K562 (cell line): ENCODE measurements at regions of chr6 and their contacts with region 1.

Region 1: GRCh38 chr6:137799950-137800568 is 67.0 kb upstream of the TNFAIP3 start:
- DNase-seq: peak; percentile 51 to 88 (median 60)
- ATAC-seq: peak; percentile 92
- H3K4me3 ChIP-seq: no peak overlapping the region
- H3K27ac ChIP-seq: no peak overlapping the region
- H3K4me1 ChIP-seq: peaks cover 0 to 6% of the 10 kb centered on the region in 2 experiments; a peak in 4 of 5 replicates
- H3K27me3 ChIP-seq: no peaks in the 10 kb centered on the region
- CTCF ChIP-seq: peak; percentile 79 to 93 (median 85)
- EP300 ChIP-seq: 0 out of 2 replicates have a peak, but pooled peaks have one; percentile 18
- POLR2A ChIP-seq: no peak
- RAD21 ChIP-seq: peak; percentile 97 to 98

Region 2: DNA sequence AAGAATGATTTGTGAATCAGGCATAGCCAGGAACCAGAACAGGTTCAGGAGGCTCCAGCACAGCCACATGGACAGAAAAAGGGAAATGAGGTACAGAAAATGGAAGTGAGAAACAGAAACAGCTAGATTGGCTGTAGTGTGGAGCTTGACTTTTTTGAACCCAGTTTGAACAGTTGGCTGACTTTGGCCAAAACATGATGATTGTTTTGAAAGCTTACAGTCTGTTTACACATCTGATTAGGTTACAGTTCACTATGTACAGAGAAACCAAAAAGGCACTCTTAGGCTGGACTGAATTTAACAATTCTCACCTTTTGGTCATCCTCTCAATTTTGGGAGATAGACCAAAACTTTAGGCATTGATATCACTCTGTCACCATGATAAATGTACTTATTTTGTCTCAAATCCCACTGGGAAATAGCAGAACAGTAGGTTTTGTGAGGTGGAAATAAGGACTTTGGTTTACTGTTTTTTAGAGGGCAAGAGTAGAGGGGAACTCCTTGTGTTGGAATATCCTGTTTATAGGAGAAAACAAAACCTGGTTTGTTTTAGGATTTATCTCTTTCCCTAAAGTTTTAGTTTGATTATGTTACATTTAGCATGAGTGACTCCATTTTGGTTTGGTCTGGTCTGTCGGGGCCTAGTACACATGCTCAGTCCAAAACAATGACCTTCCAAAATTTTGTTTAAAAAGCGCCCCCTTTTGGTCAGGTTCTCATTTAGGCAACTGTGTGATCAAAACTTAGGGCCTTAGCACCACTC is 429.0 kb before region 1 on chr6:
- CTCF ChIA-PET with region 1: no interaction called
- POLR2A ChIA-PET with region 1: no interaction called
- in situ Hi-C with region 1: no loop called
- intact Hi-C with region 1: no loop called
- DNase-seq: peak in 1 of 4 experiments; percentile 42
- ATAC-seq: peak; percentile 77
- H3K4me3 ChIP-seq: no peak overlapping the region
- H3K27ac ChIP-seq: no peak overlapping the region
- H3K4me1 ChIP-seq: no peaks in the 10 kb centered on the region
- H3K27me3 ChIP-seq: peaks cover 0 to 2% of the 10 kb centered on the region in 2 experiments; a peak in 1 of 5 replicates
- CTCF ChIP-seq: peak in 2 of 3 experiments; percentile 39 to 46; a peak in 3 of 6 replicates
- EP300 ChIP-seq: no peak
- POLR2A ChIP-seq: no peak
- RAD21 ChIP-seq: peak in 1 of 2 experiments; percentile 17; a peak in 1 of 4 replicates

Region 3: DNA sequence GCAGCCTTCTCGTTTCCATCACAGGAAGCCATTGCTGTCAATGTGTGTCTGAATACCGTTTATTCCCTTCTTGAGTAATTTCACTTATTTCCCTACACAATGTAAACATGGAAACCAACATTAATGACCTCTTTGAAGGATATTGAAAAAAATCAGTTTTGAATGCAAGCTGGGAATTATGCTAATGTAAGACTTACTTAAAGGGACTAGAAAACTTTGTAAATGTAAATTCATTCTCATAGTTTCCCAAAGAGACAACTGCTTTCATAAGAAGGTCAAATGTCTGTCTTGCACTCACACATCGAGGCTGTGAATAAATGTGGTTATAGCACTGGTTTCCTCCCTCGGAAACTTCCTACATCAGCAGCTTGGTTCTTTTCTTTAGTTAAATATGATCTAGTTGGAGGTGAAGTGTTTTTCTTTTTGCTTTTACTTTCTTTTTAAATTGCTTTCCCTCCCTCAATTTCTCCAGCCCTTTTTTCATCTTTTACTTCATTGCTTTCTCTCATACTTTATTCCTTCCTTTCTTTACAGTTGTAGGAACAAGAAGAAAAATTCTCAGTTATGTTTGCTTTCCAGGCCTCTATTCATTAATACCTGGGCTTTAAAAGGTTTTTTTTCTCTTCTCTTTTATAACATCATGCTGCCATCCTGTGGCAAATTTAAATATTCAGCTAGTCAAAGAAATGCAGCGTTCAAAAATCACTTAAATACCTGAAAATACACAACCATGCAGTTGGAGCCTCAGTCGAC is 175.3 kb after region 1 on chr6:
- CTCF ChIA-PET with region 1: interaction called, 5 read pairs
- POLR2A ChIA-PET with region 1: interaction called, 3 read pairs
- in situ Hi-C with region 1: no loop called
- intact Hi-C with region 1: loop called (anchors 1 kb)
- DNase-seq: no peak
- ATAC-seq: peak; percentile 49; the same call in 2 of the 3 replicates
- H3K4me3 ChIP-seq: no peak overlapping the region
- H3K27ac ChIP-seq: no peak overlapping the region
- H3K4me1 ChIP-seq: peaks cover 5 to 15% of the 10 kb centered on the region in 2 experiments; a peak in 3 of 5 replicates
- H3K27me3 ChIP-seq: no peaks in the 10 kb centered on the region
- CTCF ChIP-seq: peak; percentile 29 to 70 (median 46); a peak in 3 of 6 replicates
- EP300 ChIP-seq: no peak
- POLR2A ChIP-seq: no peak
- RAD21 ChIP-seq: peak; percentile 83 to 89